Naive thymus-derived CD4-positive, alpha-beta T cell (primary cell): ENCODE measurements at regions of chr13 and their contacts with region 1.

Region 1: GRCh38 chr13:102642475-102642874 is 45.7 kb downstream of the TPP2 start:
- DNase-seq: no peak
- ATAC-seq: no peak
- H3K4me3 ChIP-seq: no peak overlapping the region
- H3K4me3 Mint-ChIP-seq: no peak overlapping the region
- H3K27ac ChIP-seq: no peak overlapping the region
- H3K27ac Mint-ChIP-seq: peak overlapping the region in 1 of 9 donors; percentile 3
- H3K4me1 ChIP-seq: no peaks in the 10 kb centered on the region
- H3K4me1 Mint-ChIP-seq: peaks cover 0 to 6% (median 3%) of the 10 kb centered on the region in 7 donors
- H3K27me3 ChIP-seq: no peaks in the 10 kb centered on the region
- H3K27me3 Mint-ChIP-seq: no peaks in the 10 kb centered on the region

Region 2: GRCh38 chr13:101985321-101985720 is 657.2 kb before region 1 on chr13:
- CTCF ChIA-PET with region 1: no interaction called
- POLR2A ChIA-PET with region 1: no interaction called
- intact Hi-C with region 1: no loop called
- DNase-seq: no peak
- ATAC-seq: no peak
- H3K4me3 ChIP-seq: no peak overlapping the region
- H3K4me3 Mint-ChIP-seq: no peak overlapping the region
- H3K27ac ChIP-seq: no peak overlapping the region
- H3K27ac Mint-ChIP-seq: no peak overlapping the region
- H3K4me1 ChIP-seq: no peaks in the 10 kb centered on the region
- H3K4me1 Mint-ChIP-seq: no peaks in the 10 kb centered on the region
- H3K27me3 ChIP-seq: peaks cover 0 to 6% of the 10 kb centered on the region in 2 donors
- H3K27me3 Mint-ChIP-seq: peaks cover 0 to 11% (median 6%) of the 10 kb centered on the region in 5 donors

Region 3: DNA sequence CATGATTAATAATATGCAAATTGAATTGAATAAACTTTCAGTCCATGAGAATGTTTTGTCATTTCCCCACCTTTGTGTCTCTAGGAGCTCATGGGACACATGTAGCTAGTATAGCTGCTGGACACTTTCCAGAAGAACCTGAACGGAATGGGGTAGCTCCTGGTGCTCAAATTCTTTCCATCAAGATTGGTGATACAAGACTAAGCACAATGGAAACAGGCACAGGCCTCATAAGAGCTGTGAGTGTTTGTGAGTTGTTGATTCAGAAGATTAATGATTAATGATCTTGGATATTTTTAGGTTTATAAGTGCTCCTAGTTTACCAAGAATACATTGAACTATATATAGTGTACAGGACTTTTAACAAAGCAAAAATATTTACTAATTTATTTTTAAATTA is 15.5 kb before region 1 on chr13:
- CTCF ChIA-PET with region 1: no interaction called
- POLR2A ChIA-PET with region 1: no interaction called
- intact Hi-C with region 1: loop called in 1 of 2 experiments (anchors 2 kb)
- DNase-seq: no peak
- ATAC-seq: no peak
- H3K4me3 ChIP-seq: no peak overlapping the region
- H3K4me3 Mint-ChIP-seq: no peak overlapping the region
- H3K27ac ChIP-seq: no peak overlapping the region
- H3K27ac Mint-ChIP-seq: no peak overlapping the region
- H3K4me1 ChIP-seq: no peaks in the 10 kb centered on the region
- H3K4me1 Mint-ChIP-seq: peaks cover 0 to 4% (median 2%) of the 10 kb centered on the region in 7 donors
- H3K27me3 ChIP-seq: no peaks in the 10 kb centered on the region
- H3K27me3 Mint-ChIP-seq: no peaks in the 10 kb centered on the region

Region 4: DNA sequence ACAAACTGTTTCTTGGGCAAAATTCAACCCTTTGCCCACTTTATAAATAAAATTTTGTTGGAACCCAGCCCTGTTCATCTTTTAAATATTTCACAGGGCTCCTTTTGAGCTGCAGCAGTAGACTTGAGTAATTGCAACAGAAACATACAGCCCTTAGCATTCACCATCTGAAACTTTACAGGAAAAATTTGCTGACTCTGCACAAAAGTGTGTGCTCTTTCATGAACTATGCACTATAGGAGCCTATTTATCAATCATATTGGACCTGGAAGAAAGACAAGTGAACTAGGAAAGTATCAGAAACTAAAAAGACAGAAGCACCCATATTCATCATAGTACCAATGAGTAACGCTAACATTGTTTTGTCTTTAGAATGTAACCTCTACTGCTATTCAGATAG is 830.6 kb after region 1 on chr13:
- CTCF ChIA-PET with region 1: no interaction called
- POLR2A ChIA-PET with region 1: no interaction called
- intact Hi-C with region 1: no loop called
- DNase-seq: no peak
- ATAC-seq: no peak
- H3K4me3 ChIP-seq: no peak overlapping the region
- H3K4me3 Mint-ChIP-seq: no peak overlapping the region
- H3K27ac ChIP-seq: no peak overlapping the region
- H3K27ac Mint-ChIP-seq: no peak overlapping the region
- H3K4me1 ChIP-seq: no peaks in the 10 kb centered on the region
- H3K4me1 Mint-ChIP-seq: no peaks in the 10 kb centered on the region
- H3K27me3 ChIP-seq: no peaks in the 10 kb centered on the region
- H3K27me3 Mint-ChIP-seq: no peaks in the 10 kb centered on the region